Left ventricle myocardium superior (tissue), 1 donor: ENCODE measurements at regions of chr4 and their contacts with region 1.

Region 1: DNA sequence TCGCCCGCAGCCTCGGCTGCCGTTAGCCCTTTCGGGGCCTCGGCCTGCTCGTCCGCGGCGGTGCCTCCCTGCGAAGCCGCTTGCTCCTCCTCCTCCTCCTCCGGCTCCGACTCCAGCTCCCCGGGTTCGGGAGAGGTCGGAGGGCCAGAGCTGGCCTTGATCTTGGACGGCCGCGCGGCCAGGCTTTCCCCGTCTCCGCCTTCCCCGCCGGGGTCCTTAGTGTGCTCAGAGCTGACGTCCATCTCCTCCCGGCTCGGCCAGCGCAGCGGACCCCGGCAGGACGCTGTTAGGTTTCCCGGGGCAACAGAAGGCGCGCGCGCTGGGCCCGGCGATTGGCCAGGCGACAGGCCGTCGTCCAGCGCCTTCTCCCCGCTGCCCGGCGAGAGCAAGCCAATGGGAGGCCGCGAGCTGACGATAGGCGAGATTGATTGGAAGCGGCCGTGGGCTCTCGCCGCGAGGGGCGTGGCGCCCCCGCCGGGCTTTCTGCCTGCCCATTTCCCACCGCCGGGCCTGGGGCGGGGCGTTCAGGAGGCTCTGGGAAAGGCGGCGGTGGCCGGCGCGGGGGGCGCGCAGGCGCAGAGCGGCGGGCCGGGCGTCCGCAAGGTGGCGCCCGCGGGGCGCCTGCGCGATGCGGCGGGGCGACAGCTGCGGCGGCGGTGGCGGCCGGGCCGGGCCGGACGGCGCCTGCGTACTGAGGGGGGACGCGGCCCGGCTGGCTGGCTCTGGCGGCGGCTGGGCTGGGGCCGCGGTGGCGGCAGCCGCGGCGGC is at the start of gene TADA2B:
- DNase-seq: peak; percentile 99
- ATAC-seq: peak; percentile 94
- total RNA-seq, gene TADA2B: 34.6 TPM

Region 2: DNA sequence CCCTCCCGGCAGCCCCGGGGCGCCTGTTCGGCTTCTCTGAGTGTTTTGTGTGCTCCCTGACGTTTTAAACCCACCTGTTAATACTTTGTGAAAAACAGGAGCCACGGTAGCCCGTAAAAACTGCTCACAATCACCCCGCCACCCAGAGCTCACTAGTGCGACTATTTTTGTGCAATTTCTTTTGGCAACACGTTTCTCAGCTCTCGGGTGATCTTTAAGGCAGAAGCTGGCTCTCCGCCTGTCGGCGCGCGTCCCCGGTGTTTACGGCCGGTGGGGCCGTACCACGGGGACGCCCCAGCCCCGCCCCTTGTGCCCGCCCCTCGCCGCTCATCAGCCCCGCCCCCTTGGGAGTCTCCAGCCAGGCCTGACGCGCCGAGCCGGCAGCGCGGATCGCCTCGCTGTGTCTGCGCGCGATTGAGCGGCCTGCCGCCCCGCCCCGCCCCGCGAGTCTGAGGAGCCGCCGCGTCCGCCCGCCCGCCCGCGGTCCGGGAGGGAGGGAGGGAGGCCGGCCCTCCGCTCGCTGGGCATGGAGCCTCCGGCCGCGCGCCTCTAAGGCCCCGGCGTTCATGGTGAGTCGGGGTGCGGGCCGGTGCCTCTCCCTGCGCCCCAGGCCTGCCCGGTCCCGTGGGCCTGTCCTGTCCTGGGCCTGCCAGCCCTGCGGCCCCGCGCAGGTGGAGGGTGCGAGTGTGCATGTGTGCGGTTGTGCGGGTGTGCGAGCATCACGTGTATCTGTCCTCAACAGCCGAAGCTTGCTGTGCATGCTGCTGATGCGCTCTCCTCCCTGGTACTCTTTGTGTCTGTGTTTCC is 55.9 kb before region 1 on chr4:
- intact Hi-C with region 1: loop called (anchors 10 kb)
- DNase-seq: peak; percentile 98
- ATAC-seq: peak; percentile 95

Region 3: GRCh38 chr4:7110546-7110945 is 67.7 kb after region 1 on chr4:
- intact Hi-C with region 1: no loop called
- DNase-seq: no peak
- ATAC-seq: no peak